Endothelial cell of umbilical vein (primary cell): ENCODE measurements at regions of chr2 and their contacts with region 1.

Region 1: GRCh38 chr2:237674731-237675276 is 47.4 kb downstream of the LRRFIP1 start:
- DNase-seq: peak; percentile 96
- H3K4me3 ChIP-seq: peak overlapping the region in 2 of 3 experiments; percentile 12 to 16
- H3K27ac ChIP-seq: peak overlapping the region; percentile 96
- H3K4me1 ChIP-seq: peaks cover 56% of the 10 kb centered on the region
- H3K27me3 ChIP-seq: no peaks in the 10 kb centered on the region
- CTCF ChIP-seq: no peak
- POLR2A ChIP-seq: peak; percentile 45

Region 2: GRCh38 chr2:237603718-237604362 is 71.0 kb before region 1 on chr2:
- CTCF ChIA-PET with region 1: interaction called, 21 read pairs
- POLR2A ChIA-PET with region 1: no interaction called
- dilution Hi-C with region 1: no loop called
- intact Hi-C with region 1: loop called (anchors 1 kb)
- DNase-seq: peak; percentile 96
- H3K4me3 ChIP-seq: no peak overlapping the region
- H3K27ac ChIP-seq: peak overlapping the region; percentile 91
- H3K4me1 ChIP-seq: peaks cover 29% of the 10 kb centered on the region
- H3K27me3 ChIP-seq: no peaks in the 10 kb centered on the region
- CTCF ChIP-seq: no peak
- POLR2A ChIP-seq: no peak

Region 3: DNA sequence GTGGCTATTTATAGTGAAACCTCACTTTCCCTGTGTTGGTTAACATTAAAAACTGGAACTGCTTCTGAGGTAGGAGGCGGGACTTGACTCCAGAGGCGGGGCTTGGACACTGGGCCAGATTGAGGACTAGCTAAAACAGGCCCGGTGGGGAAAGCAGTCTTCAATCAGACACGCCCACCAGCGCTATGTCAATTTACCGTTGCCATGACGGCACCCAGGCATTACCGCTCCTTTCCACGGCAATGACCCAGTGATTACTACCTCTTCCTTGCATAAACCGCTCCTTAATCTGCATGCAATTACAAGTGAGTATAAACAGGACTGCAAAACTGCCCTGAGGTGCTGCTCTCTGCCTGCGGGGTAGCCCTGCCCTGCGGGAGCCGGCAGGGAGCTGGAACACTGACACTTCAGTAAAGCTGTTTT is 12.1 kb before region 1 on chr2:
- CTCF ChIA-PET with region 1: interaction called, 12 read pairs
- POLR2A ChIA-PET with region 1: no interaction called
- dilution Hi-C with region 1: no loop called
- intact Hi-C with region 1: no loop called
- DNase-seq: peak; percentile 78
- H3K4me3 ChIP-seq: no peak overlapping the region
- H3K27ac ChIP-seq: no peak overlapping the region
- H3K4me1 ChIP-seq: no peaks in the 10 kb centered on the region
- H3K27me3 ChIP-seq: no peaks in the 10 kb centered on the region
- CTCF ChIP-seq: no peak
- POLR2A ChIP-seq: no peak

Region 4: DNA sequence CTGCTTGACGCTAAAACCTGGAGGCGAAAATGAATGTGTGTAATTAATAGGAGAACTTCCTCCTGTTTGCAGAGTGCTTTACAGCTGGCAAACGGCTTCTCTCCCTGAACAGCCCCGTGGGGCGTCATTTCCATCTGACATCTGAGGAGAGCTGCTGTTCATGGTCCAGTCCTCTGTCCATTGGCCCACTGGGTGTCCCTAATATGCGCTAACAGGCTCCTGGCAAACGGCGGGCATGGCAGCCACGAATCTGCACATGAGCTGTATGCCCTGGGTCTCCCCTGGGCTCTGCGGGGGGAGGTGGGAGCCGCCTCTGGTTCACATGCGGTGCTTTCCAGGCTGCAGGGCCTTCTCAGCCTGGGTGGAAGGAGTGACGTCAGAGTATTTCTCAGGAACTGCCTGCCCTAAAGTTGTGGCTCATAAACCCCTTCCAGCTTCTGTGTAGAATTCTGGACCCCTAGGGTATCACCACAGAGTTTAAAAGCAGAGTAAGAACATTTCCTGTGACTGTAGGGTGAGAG is 25.8 kb after region 1 on chr2:
- CTCF ChIA-PET with region 1: interaction called, 40 read pairs
- POLR2A ChIA-PET with region 1: no interaction called
- dilution Hi-C with region 1: no loop called
- intact Hi-C with region 1: loop called (anchors 1 kb)
- DNase-seq: peak; percentile 85
- H3K4me3 ChIP-seq: no peak overlapping the region
- H3K27ac ChIP-seq: peak overlapping the region; percentile 52
- H3K4me1 ChIP-seq: peaks cover 86% of the 10 kb centered on the region
- H3K27me3 ChIP-seq: no peaks in the 10 kb centered on the region
- CTCF ChIP-seq: no peak
- POLR2A ChIP-seq: no peak

Region 5: GRCh38 chr2:237731663-237732062 is 56.9 kb after region 1 on chr2:
- CTCF ChIA-PET with region 1: interaction called, 19 read pairs
- POLR2A ChIA-PET with region 1: no interaction called
- dilution Hi-C with region 1: no loop called
- intact Hi-C with region 1: loop called (anchors 2 kb)
- DNase-seq: peak; percentile 78
- H3K4me3 ChIP-seq: no peak overlapping the region
- H3K27ac ChIP-seq: peak overlapping the region; percentile 10
- H3K4me1 ChIP-seq: peaks cover 67% of the 10 kb centered on the region
- H3K27me3 ChIP-seq: no peaks in the 10 kb centered on the region
- CTCF ChIP-seq: no peak
- POLR2A ChIP-seq: no peak

Region 6: DNA sequence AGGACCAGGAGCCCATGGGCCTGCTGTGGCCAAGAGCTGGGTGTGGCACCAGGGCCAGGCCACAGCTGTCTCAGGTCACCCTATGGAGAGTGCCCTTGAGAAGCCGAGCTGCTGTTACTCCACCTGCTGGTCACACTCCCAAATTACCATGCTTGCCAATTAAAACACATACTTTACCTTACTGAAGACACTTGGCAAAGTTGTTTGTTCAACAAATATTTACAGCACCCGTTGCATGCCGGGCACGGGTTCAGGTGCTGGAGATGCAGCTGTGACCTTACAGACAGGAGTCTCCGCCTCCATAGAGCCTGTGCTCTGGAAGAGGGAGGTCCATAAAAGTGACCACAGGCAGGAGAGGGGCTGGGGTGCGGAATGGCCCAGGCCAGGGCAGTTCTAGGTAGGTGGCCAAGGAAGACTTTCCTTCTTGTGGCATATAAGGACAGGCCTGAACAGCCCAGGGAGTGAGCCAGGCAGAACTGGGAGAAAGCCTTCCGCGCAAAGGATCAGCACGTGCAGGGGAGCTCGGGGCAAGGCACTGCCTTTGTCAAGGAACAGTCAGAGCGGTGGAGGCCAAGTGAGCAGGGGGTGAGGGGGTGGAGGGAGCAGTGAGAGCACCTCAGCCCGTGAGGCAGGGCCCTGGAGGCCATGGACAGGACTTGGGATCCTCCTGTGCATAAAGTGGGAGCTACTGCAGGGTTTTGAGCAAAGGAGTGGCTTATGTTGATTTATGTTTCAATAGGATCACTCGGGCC is 100.2 kb after region 1 on chr2:
- CTCF ChIA-PET with region 1: interaction called, 7 read pairs
- POLR2A ChIA-PET with region 1: no interaction called
- dilution Hi-C with region 1: no loop called
- intact Hi-C with region 1: loop called (anchors 1 kb)
- DNase-seq: peak; percentile 69
- H3K4me3 ChIP-seq: no peak overlapping the region
- H3K27ac ChIP-seq: no peak overlapping the region
- H3K4me1 ChIP-seq: no peaks in the 10 kb centered on the region
- H3K27me3 ChIP-seq: no peaks in the 10 kb centered on the region
- CTCF ChIP-seq: peak; percentile 76 to 77
- POLR2A ChIP-seq: no peak